A549 (cell line): ENCODE measurements at regions of chr15 and their contacts with region 1.

Region 1: GRCh38 chr15:40506964-40507571 is 36.3 kb downstream of the CHST14 start:
- DNase-seq: peak; percentile 71 to 79
- ATAC-seq: peak; percentile 97 to 98
- H3K4me3 ChIP-seq: peak overlapping the region; percentile 14; the same call in 1 of the 3 replicates
- H3K27ac ChIP-seq: peak overlapping the region; percentile 55 to 86; a peak in 5 of 6 replicates
- H3K4me1 ChIP-seq: peaks cover 7% of the 10 kb centered on the region; the same call in 2 of the 3 replicates
- CTCF ChIP-seq: peak; percentile 54
- EP300 ChIP-seq: no peak
- POLR2A ChIP-seq: no peak
- RAD21 ChIP-seq: peak; percentile 53 to 58

Region 2: DNA sequence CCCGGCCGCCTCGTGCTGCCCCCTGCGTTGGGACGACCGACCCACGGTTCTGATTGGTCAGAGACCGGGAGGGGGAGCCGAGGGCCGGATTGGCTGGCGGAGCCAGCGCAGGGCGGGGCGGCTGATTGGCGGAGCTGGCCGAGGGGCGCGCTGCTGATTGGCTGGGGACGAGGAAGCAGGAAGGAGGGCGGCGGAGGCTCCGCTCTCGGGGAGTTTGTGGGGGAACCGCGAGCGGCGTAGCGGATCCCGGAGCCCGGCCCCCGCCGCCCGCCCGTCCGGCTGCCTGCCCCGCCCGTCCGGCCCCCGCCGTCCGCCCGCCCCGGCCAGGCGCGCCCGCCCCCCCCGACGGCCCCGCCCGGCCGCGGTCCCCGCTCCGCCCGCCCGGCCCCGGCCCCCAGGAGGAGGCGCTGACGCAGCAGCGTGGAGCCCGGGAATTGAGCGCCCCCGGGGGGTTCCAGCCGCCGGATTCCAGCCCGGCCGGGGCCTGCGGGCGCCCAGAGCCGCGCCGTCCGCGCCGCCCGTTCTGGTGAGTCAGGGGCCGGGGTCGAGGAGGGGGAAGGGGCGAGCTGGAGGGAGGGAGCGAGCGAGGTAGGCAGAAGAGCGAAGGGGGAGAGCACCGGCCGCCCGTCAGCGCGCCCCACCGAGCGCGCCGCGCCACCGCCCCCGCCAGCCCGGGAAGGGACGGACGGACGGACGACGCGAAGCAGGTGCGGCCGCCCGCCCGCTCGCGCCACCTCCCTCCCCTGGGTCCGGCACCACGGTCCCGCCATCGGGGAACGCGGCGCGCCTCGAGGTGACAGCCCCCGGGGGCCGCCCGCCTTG is 66.1 kb before region 1 on chr15 and contains the start of gene BAHD1:
- CTCF ChIA-PET with region 1: interaction called, 18 read pairs
- POLR2A ChIA-PET with region 1: no interaction called
- DNase-seq: peak; percentile 89 to 96
- ATAC-seq: peak; percentile 84 to 92
- H3K4me3 ChIP-seq: peak within 1 kb of the TSS; percentile 93
- H3K27ac ChIP-seq: peak within 1 kb of the TSS; percentile 91 to 100
- H3K4me1 ChIP-seq: peaks cover 21% of the 10 kb centered on the region; the same call in 1 of the 3 replicates
- CTCF ChIP-seq: no peak
- EP300 ChIP-seq: no peak
- POLR2A ChIP-seq: no peak
- RAD21 ChIP-seq: 0 out of 5 replicates have a peak, but pooled peaks of 1 of the 2 experiments have one; percentile 11
- polyA plus RNA-seq, gene BAHD1: 2.3 and 2.8 TPM in 2 replicates

Region 3: DNA sequence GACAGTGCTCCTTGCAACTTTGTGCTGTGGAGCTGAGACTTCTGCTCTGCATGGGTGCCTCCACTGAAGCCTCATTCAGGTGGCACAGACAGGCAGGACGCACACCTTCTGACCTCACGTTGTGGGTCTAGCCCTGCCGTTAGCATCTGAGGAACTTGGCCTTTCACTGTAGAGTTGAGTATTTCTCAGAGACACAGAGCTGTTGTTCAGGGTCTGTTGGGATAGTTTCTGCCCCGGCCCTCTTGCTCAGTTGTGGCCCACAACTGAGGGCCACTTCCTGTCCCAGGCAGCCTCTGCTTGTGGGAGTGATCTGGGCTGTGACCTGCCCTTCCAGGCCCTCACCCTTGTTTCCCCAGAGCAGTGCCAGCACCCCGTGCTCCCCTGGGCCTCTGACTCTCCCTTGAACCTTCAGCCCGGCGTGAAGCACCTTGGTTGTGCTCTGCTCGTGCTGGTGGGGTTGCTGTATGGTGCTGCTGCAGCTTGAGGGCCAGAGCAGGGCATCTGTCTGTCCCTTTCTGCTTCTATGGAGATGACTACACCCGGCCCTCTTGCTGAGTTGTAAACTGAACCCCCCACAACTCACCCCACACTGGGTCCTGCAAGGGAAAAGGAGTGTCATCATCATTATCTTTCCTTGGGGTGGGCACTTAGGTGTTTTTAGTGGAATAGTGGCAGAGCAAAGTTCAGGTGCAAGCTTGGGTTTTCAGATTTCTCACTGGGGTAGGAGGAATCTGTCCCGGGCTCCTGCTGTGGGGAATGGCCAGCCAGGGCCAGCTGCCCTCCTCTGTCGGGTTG is 54.6 kb before region 1 on chr15:
- CTCF ChIA-PET with region 1: interaction called, 12 read pairs
- POLR2A ChIA-PET with region 1: no interaction called
- DNase-seq: no peak
- ATAC-seq: no peak
- H3K4me3 ChIP-seq: no peak overlapping the region
- H3K27ac ChIP-seq: no peak overlapping the region
- H3K4me1 ChIP-seq: peaks cover 44% of the 10 kb centered on the region
- CTCF ChIP-seq: no peak
- EP300 ChIP-seq: no peak
- POLR2A ChIP-seq: no peak
- RAD21 ChIP-seq: no peak

Region 4: DNA sequence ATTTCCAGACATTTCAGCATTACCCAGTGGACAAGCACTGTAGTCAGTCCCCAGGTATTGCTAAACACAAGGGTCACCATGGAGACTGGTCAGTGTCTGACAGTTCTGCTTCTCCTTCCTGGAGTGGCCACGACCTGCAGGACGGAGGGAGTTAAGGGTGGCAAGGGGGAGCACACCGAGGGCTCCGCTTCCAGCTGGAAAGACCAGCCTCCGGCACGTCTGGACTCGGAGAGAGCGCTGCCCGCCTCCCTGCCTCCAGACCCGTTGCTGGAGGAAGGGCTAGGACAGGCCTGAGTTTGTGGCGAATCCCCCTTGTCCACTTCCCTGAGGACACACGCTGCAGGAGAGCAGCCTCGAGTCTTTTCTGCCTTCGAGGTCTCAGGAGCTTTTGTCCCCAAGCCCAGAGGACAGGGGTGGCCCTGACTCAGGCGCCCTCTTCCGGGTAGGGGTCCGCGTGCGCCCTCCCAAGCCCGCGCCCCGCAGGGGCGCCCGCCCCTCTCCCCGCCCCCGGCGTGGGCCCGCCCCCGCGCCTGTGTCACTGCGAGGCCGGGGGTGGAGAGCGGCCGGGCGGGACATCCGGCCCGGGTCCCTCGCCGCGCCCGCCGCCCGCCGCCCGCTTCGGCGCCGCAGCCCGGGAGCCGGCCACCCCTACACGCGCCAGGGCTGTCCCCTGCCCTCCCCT is 36.5 kb before region 1 on chr15 and contains the start of gene CHST14:
- CTCF ChIA-PET with region 1: interaction called, 12 read pairs
- POLR2A ChIA-PET with region 1: no interaction called
- DNase-seq: peak; percentile 37 to 48
- ATAC-seq: peak; percentile 81 to 86
- H3K4me3 ChIP-seq: peak within 1 kb of the TSS; percentile 96
- H3K27ac ChIP-seq: peak within 1 kb of the TSS; percentile 98
- H3K4me1 ChIP-seq: peaks cover 12% of the 10 kb centered on the region
- CTCF ChIP-seq: no peak
- EP300 ChIP-seq: no peak
- POLR2A ChIP-seq: peak; percentile 42
- RAD21 ChIP-seq: no peak
- polyA plus RNA-seq, gene CHST14: 8.6 and 9.8 TPM in 2 replicates

Region 5: GRCh38 chr15:40763801-40764732 is 257.0 kb after region 1 on chr15 and contains the start of gene GCHFR:
- CTCF ChIA-PET with region 1: no interaction called
- POLR2A ChIA-PET with region 1: no interaction called
- DNase-seq: peak; percentile 67 to 73
- ATAC-seq: peak; percentile 78 to 86
- H3K4me3 ChIP-seq: peak within 1 kb of the TSS; percentile 59
- H3K27ac ChIP-seq: peak within 1 kb of the TSS; percentile 74 to 89
- H3K4me1 ChIP-seq: peaks cover 14% of the 10 kb centered on the region; the same call in 2 of the 3 replicates
- CTCF ChIP-seq: peak; percentile 20; the same call in 1 of the 3 replicates
- EP300 ChIP-seq: no peak
- POLR2A ChIP-seq: 0 out of 2 replicates have a peak, but pooled peaks have one; percentile 6
- RAD21 ChIP-seq: no peak
- polyA plus RNA-seq, gene GCHFR: 6.9 and 7.7 TPM in 2 replicates